ENCODE measurements at regions of chrX and their contacts with region 1.

Region 1: DNA sequence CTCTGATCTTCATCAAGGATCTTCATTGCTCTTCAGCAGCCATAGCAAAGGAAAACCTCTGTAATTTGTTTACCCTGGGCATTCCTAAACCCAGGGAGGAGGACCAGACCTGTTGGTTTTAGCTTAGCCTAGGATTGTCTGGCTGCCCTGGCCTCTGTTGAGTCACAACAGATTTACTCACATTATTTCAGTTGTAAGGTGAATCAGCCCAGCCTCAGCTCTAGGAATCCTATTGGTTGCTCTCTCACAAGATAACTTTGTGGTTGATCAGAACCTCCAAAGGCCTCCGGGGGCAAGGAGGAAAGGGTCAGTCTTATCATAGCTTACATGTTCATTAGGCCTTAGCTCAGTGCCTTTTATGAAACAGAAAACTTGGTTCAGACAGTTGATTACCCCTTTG is 41.0 kb downstream of the PDK3 start:
- DNase-seq: no peak
- H3K4me3 ChIP-seq: no peak overlapping the region
- H3K27ac ChIP-seq: no peak overlapping the region
- H3K4me1 ChIP-seq: no peaks in the 10 kb centered on the region
- H3K27me3 ChIP-seq: no peaks in the 10 kb centered on the region
- CTCF ChIP-seq: no peak
- EP300 ChIP-seq: no peak
- POLR2A ChIP-seq: no peak

Region 2: DNA sequence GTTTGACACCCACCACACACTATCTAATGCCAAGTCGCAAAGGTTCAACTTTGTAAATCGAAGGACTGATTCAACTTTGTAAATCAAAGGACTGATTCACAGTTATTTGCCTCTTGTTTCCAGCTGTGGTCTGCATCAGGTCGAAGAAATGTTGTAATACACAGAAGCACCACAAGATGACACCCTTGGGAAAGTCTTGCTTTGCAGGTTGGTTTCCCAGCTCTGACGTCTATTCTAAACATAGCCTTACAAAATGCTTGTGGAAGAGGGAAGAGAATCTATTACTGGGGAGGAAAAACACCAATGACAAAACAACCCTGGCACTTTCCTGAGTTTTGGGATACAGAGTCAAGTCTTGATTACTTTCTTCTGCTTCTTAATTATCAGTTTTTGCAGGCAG is 110.3 kb before region 1 on chrX:
- intact Hi-C with region 1: loop called (anchors 10 kb)
- DNase-seq: peak; percentile 31 to 90
- H3K4me3 ChIP-seq: no peak overlapping the region
- H3K27ac ChIP-seq: peak overlapping the region in 3 of 5 donors; percentile 31 to 68 (median 37)
- H3K4me1 ChIP-seq: peaks cover 0 to 8% (median 0%) of the 10 kb centered on the region in 4 donors
- H3K27me3 ChIP-seq: peaks cover 0 to 8% (median 0%) of the 10 kb centered on the region in 3 donors
- CTCF ChIP-seq: peak in 5 of 7 experiments; percentile 52 to 85 (median 66)
- EP300 ChIP-seq: no peak
- POLR2A ChIP-seq: no peak